Cardiac septum (tissue), 1 donor: ENCODE measurements at regions of chr13 and their contacts with region 1.

Region 1: GRCh38 chr13:21297914-21298831 is 121.7 kb downstream of the MRPL57 start:
- DNase-seq: peak; percentile 93

Region 2: GRCh38 chr13:21443171-21443570 is 145.0 kb after region 1 on chr13:
- intact Hi-C with region 1: no loop called
- DNase-seq: no peak

Region 3: GRCh38 chr13:21458813-21459701 is 160.9 kb after region 1 on chr13 and contains the start of gene ZDHHC20:
- intact Hi-C with region 1: loop called (anchors 5 kb)
- DNase-seq: peak; percentile 97
- total RNA-seq, gene ZDHHC20: 20.2 TPM

Region 4: GRCh38 chr13:21476893-21477472 is 178.8 kb after region 1 on chr13:
- intact Hi-C with region 1: loop called (anchors 1 kb)
- DNase-seq: peak; percentile 86